ENCODE measurements at regions of chr7 and their contacts with region 1.

Region 1: DNA sequence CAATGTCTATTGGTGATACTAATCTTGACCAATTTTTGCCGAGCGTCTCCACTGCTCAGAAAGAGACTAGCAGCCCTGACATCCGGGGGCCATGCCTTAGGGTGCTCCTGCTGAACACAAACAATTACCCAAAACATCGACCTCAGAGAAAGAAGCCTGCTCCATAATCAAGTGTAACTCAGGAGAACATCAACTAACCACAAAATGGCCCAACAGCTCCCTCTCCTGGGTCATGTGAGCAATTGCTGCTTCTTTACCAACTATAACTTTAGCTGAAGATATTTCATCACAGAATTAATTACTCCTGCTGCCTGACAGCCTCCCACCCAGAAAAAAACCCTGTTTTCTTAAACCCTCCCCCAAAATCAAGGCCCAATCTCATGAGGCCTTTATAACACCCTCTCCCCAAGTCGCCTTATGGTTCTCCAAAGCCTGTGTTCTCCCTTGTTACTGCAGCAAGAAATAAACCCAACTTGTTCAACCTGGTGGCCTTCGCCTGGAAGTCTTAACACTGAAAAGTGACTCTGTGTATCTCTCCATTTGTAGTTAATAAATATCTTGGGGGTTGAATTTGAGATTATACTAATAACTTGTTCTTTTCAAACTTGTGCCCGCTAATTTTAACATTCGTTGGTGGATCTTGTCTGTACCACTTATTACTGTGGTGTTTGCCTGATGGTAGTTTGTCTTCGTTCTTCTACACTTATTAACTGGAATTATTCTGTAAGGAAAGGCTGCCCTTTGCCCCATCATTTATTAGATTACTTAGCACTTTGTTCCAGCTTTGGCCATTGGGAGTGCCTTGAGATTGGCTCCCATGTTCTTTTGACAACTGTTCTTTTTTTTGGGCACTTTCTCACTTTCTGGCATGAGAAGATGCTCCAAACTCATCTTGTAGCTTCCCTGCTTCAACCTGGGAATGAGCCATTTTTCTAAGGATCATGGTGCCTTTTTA is 21.2 kb upstream of the RAMP3 start:
- DNase-seq: peak; percentile 65 to 77 (median 74)
- H3K4me3 ChIP-seq: no peak overlapping the region
- H3K4me3 Mint-ChIP-seq: peak overlapping the region in 1 of 8 donors; percentile 55
- H3K27ac ChIP-seq: no peak overlapping the region
- H3K27ac Mint-ChIP-seq: peak overlapping the region in 5 of 7 donors; percentile 1 to 86 (median 73)
- H3K4me1 ChIP-seq: peaks cover 4% of the 10 kb centered on the region
- H3K4me1 Mint-ChIP-seq: peaks cover 6 to 11% (median 9%) of the 10 kb centered on the region in 4 donors
- H3K27me3 ChIP-seq: no peaks in the 10 kb centered on the region
- H3K27me3 Mint-ChIP-seq: no peaks in the 10 kb centered on the region

Region 2: GRCh38 chr7:44858161-44858560 is 278.2 kb before region 1 on chr7:
- CTCF ChIA-PET with region 1: interaction called, 159 read pairs
- POLR2A ChIA-PET with region 1: interaction called, 6 read pairs
- intact Hi-C with region 1: loop called (anchors 1 kb)
- DNase-seq: no peak
- H3K4me3 ChIP-seq: no peak overlapping the region
- H3K4me3 Mint-ChIP-seq: no peak overlapping the region
- H3K27ac ChIP-seq: no peak overlapping the region
- H3K27ac Mint-ChIP-seq: peak overlapping the region in 1 of 7 donors; percentile 24
- H3K4me1 ChIP-seq: peaks cover 5% of the 10 kb centered on the region
- H3K4me1 Mint-ChIP-seq: peaks cover 3 to 6% (median 4%) of the 10 kb centered on the region in 4 donors
- H3K27me3 ChIP-seq: no peaks in the 10 kb centered on the region
- H3K27me3 Mint-ChIP-seq: peaks cover 0 to 7% of the 10 kb centered on the region in 2 donors

Region 3: GRCh38 chr7:44980393-44981034 is 155.9 kb before region 1 on chr7:
- CTCF ChIA-PET with region 1: interaction called, 239 read pairs
- POLR2A ChIA-PET with region 1: interaction called, 11 read pairs
- intact Hi-C with region 1: no loop called
- DNase-seq: peak; percentile 51 to 96 (median 64)
- H3K4me3 ChIP-seq: peak overlapping the region in 1 of 2 donors; percentile 2
- H3K4me3 Mint-ChIP-seq: peak overlapping the region; percentile 52 to 99 (median 97)
- H3K27ac ChIP-seq: peak overlapping the region; percentile 85
- H3K27ac Mint-ChIP-seq: peak overlapping the region; percentile 96 to 99 (median 98)
- H3K4me1 ChIP-seq: peaks cover 78% of the 10 kb centered on the region
- H3K4me1 Mint-ChIP-seq: peaks cover 49 to 100% (median 70%) of the 10 kb centered on the region in 4 donors
- H3K27me3 ChIP-seq: no peaks in the 10 kb centered on the region
- H3K27me3 Mint-ChIP-seq: no peaks in the 10 kb centered on the region

Region 4: GRCh38 chr7:45080265-45080962 is 56.0 kb before region 1 on chr7:
- CTCF ChIA-PET with region 1: interaction called, 16 read pairs
- POLR2A ChIA-PET with region 1: interaction called, 4 read pairs
- intact Hi-C with region 1: loop called (anchors 1 kb)
- DNase-seq: no peak
- H3K4me3 ChIP-seq: no peak overlapping the region
- H3K4me3 Mint-ChIP-seq: no peak overlapping the region
- H3K27ac ChIP-seq: no peak overlapping the region
- H3K27ac Mint-ChIP-seq: peak overlapping the region; percentile 39 to 91 (median 83)
- H3K4me1 ChIP-seq: no peaks in the 10 kb centered on the region
- H3K4me1 Mint-ChIP-seq: peaks cover 0 to 8% (median 5%) of the 10 kb centered on the region in 4 donors
- H3K27me3 ChIP-seq: no peaks in the 10 kb centered on the region
- H3K27me3 Mint-ChIP-seq: no peaks in the 10 kb centered on the region

Region 5: DNA sequence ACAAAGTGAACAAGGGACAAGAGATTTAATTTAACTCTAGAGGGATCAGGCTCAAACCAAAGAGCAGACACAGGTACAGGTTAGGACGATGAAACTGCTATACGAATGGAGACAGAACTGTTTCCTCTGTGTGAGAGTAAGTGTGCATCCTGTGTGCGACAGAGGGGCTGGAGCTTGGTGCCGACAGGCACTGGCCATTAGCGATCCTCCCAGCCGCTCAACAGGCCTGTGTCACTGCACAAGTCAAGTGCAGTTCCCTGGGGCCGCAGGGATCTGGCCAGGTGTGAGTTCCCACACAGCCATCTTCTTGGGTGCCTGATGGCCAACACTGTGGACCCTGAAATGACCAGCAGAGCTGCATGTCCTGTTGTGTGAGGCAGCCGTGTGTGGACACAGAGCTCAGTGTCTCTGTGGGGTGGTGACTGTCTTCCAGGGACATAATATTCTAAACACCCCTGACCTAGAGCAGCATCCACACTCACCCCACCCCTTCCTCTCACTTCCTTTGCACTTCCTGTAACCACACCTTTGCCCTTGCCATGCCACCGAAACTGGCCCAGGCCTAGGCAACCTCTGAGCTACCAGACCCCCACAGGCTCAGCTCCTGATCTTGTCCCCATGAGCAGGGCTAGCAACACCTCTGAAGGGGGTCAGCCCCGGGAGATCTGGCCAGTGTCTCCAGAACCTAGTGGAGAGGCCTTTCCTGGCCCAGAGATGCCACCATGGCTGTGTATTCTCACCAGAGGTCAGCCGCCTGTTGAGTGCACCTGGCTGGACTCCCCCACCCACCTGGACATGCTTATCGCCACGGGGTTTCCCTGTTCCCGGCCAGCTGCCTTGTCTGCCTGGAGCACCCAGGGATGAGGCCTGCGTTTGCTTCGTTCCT is 13.2 kb before region 1 on chr7:
- CTCF ChIA-PET with region 1: interaction called, 19 read pairs
- POLR2A ChIA-PET with region 1: interaction called, 5 read pairs
- intact Hi-C with region 1: no loop called
- DNase-seq: peak in 2 of 5 donors; percentile 15 to 23
- H3K4me3 ChIP-seq: peak overlapping the region; percentile 9 to 19
- H3K4me3 Mint-ChIP-seq: peak overlapping the region in 7 of 8 donors; percentile 60 to 87 (median 77)
- H3K27ac ChIP-seq: peak overlapping the region; percentile 29
- H3K27ac Mint-ChIP-seq: peak overlapping the region; percentile 40 to 94 (median 87)
- H3K4me1 ChIP-seq: peaks cover 26% of the 10 kb centered on the region
- H3K4me1 Mint-ChIP-seq: peaks cover 14 to 27% (median 18%) of the 10 kb centered on the region in 4 donors
- H3K27me3 ChIP-seq: no peaks in the 10 kb centered on the region
- H3K27me3 Mint-ChIP-seq: no peaks in the 10 kb centered on the region